ENCODE measurements at regions of chr5 and their contacts with region 1.

Region 1: DNA sequence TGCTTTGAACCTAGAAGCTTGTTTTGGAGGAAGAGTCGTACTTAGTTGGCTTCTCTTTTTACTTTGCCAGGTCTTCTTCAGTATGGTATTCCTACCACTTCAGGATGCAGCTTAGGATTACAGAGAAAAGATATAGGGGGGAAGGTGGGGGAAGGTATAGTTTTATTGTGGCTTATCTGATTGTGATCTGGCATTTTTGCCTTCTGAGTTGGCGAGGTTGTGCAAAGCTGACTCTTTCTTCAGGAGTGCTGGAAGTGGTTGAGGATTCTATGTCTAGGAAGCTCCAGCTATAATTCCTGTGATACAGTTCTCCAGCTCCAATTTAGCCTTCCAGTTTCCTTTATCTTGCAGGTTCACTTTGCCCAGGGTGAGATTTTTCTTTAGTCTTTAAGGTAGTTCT is 7.0 kb downstream of the CDC42SE2 start:
- DNase-seq: no peak
- ATAC-seq: no peak
- H3K4me3 Mint-ChIP-seq: peak overlapping the region; percentile 71
- H3K27ac Mint-ChIP-seq: peak overlapping the region; percentile 97
- H3K4me1 Mint-ChIP-seq: peaks cover 72% of the 10 kb centered on the region
- H3K27me3 Mint-ChIP-seq: no peaks in the 10 kb centered on the region

Region 2: GRCh38 chr5:131281133-131281867 is 10.5 kb after region 1 on chr5:
- CTCF ChIA-PET with region 1: interaction called, 33 read pairs
- POLR2A ChIA-PET with region 1: interaction called, 9 read pairs
- intact Hi-C with region 1: loop called in 1 of 2 experiments (anchors 1 kb)
- DNase-seq: no peak
- ATAC-seq: peak; percentile 78
- H3K4me3 Mint-ChIP-seq: peak overlapping the region; percentile 74
- H3K27ac Mint-ChIP-seq: peak overlapping the region; percentile 95
- H3K4me1 Mint-ChIP-seq: peaks cover 90% of the 10 kb centered on the region
- H3K27me3 Mint-ChIP-seq: no peaks in the 10 kb centered on the region

Region 3: GRCh38 chr5:131289738-131290137 is 18.9 kb after region 1 on chr5:
- CTCF ChIA-PET with region 1: interaction called, 6 read pairs
- POLR2A ChIA-PET with region 1: interaction called, 9 read pairs
- intact Hi-C with region 1: loop called in 1 of 2 experiments (anchors 2 kb)
- DNase-seq: peak; percentile 61
- ATAC-seq: peak; percentile 80
- H3K4me3 Mint-ChIP-seq: peak overlapping the region; percentile 64
- H3K27ac Mint-ChIP-seq: peak overlapping the region; percentile 98
- H3K4me1 Mint-ChIP-seq: peaks cover 72% of the 10 kb centered on the region
- H3K27me3 Mint-ChIP-seq: no peaks in the 10 kb centered on the region

Region 4: DNA sequence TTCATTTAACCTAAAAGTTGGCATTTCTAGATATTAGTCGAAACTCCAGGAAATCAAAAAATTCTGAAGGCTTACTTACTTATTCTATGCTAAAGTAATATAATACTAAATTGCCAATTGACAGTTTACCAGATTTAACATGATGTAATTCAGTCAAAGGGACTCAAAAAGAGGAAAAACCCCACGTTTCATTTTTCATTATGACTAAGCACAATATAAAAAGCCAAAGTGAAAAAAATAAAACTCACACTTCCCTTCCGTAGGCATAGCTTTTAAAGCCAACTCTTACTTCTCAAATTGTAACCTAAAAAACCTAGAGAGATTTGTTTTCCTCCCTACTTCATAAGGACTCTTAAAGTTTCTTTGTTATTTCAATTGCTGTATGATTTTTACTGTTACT is 217.7 kb after region 1 on chr5:
- CTCF ChIA-PET with region 1: no interaction called
- POLR2A ChIA-PET with region 1: no interaction called
- intact Hi-C with region 1: no loop called
- DNase-seq: no peak
- ATAC-seq: peak; percentile 85
- H3K4me3 Mint-ChIP-seq: peak overlapping the region; percentile 21
- H3K27ac Mint-ChIP-seq: peak overlapping the region; percentile 42
- H3K4me1 Mint-ChIP-seq: peaks cover 34% of the 10 kb centered on the region
- H3K27me3 Mint-ChIP-seq: no peaks in the 10 kb centered on the region

Region 5: GRCh38 chr5:132094393-132095076 is 823.7 kb after region 1 on chr5:
- CTCF ChIA-PET with region 1: no interaction called
- POLR2A ChIA-PET with region 1: no interaction called
- intact Hi-C with region 1: loop called in 1 of 2 experiments (anchors 5 kb)
- DNase-seq: no peak
- ATAC-seq: no peak
- H3K4me3 Mint-ChIP-seq: no peak overlapping the region
- H3K27ac Mint-ChIP-seq: peak overlapping the region; percentile 49
- H3K4me1 Mint-ChIP-seq: peaks cover 60% of the 10 kb centered on the region
- H3K27me3 Mint-ChIP-seq: no peaks in the 10 kb centered on the region